Gastrocnemius medialis (tissue), 4 donors: ENCODE measurements at regions of chr12 and their contacts with region 1.

Region 1: GRCh38 chr12:123050331-123050831 is 69.9 kb downstream of the ARL6IP4 start:
- DNase-seq: peak; percentile 77 to 92
- ATAC-seq: peak; percentile 88 to 94
- H3K4me3 ChIP-seq: no peak overlapping the region
- H3K27ac ChIP-seq: peak overlapping the region; percentile 84 to 94 (median 90)
- H3K4me1 ChIP-seq: peaks cover 35% of the 10 kb centered on the region in 2 donors
- H3K27me3 ChIP-seq: no peaks in the 10 kb centered on the region
- CTCF ChIP-seq: no peak
- POLR2A ChIP-seq: no peak

Region 2: GRCh38 chr12:123064885-123065619 is 14.7 kb after region 1 on chr12:
- in situ Hi-C with region 1: no loop called
- intact Hi-C with region 1: loop called (anchors 1 kb)
- DNase-seq: peak; percentile 55 to 83
- ATAC-seq: peak; percentile 11 to 43
- H3K4me3 ChIP-seq: no peak overlapping the region
- H3K27ac ChIP-seq: peak overlapping the region; percentile 85 to 98 (median 94)
- H3K4me1 ChIP-seq: peaks cover 78 to 80% of the 10 kb centered on the region in 2 donors
- H3K27me3 ChIP-seq: no peaks in the 10 kb centered on the region
- CTCF ChIP-seq: peak in 3 of 5 experiments; percentile 17 to 46 (median 22)
- POLR2A ChIP-seq: no peak